Left ventricle myocardium superior (tissue), 1 donor: ENCODE measurements at regions of chr20 and their contacts with region 1.

Region 1: GRCh38 chr20:47379433-47380150 is 23.1 kb upstream of the ZMYND8 start:
- DNase-seq: no peak
- ATAC-seq: no peak

Region 2: DNA sequence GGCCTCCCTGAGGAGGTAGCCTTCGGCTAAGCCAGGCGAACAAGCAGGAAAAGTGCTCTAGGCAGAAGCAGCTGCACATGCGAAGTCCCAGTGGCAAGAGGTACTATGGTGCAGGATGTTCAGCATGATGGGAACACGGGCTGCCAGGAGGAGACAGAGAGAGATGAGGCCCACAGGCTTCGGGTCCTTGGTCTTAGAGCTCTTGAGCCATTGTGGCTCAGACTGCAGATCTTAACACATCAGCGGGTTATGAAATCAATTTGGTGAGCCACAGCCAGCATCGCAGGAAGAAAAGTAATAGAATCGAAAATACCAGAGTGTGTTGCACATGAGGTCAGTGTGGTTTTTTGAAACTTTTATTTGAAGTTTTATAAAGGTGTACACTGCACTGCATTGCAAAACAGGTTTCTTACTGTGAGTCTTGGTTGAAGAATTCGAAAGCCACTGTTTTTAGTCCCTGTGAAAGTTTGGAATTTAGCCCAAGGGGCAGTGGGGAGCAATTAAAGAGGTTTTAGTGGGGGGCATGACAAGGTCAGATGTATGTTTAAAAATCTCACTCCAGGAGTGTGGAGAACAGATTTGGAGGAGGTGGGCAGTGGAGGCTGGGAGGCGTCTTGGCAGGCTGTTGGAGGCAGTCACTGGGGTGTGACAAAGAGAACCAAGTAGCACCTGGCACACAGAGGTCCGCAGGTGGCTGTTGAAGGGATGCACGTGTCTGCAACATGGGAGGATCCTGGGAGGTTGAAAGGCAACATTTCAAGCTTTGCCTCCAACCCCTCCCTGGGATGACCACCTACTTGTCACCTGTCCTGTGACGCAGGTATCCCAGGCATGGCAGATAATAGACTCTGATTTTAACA is 415.6 kb before region 1 on chr20:
- intact Hi-C with region 1: no loop called
- DNase-seq: no peak
- ATAC-seq: no peak

Region 3: DNA sequence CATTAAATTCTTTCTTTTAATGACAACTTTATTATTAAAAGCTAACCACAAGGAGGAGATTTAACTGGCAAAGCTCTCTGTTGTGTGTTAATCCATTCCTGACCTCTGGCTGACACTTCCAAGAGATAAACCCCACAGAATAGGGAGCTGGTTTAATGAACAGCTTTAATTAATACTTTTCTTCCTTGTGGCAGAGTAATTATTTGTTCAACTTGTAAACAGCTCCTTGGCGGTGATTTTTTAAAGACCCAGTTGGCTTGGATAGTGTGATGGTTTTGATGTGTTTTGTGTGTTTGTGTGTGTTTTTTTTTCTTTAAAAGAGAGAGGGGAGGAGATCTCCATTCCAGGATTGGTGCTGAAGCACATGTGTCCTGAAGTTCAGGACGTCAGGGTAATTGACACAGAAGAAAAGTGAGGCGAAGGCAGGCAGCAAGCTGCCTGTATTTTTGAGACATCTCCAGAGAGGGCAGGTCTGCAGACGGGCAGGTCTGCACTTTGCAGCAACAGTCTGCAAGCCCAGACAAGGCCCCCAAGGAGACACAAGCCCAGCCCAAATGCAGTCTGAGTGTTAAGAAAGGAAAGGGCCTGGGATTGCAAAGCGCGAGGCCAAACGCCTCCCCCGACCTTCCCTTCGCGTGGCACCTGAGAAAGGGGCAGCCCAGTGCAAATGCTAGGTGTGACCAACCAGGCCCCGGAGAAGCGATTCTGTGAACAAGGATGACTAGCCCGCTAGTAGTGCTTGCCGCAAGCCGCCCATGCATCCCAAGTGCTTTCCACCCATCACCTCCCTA is 253.8 kb before region 1 on chr20:
- intact Hi-C with region 1: no loop called
- DNase-seq: peak; percentile 38
- ATAC-seq: peak; percentile 75

Region 4: GRCh38 chr20:47272893-47273590 is 106.5 kb before region 1 on chr20:
- intact Hi-C with region 1: loop called (anchors 1 kb)
- DNase-seq: no peak
- ATAC-seq: peak; percentile 71

Region 5: DNA sequence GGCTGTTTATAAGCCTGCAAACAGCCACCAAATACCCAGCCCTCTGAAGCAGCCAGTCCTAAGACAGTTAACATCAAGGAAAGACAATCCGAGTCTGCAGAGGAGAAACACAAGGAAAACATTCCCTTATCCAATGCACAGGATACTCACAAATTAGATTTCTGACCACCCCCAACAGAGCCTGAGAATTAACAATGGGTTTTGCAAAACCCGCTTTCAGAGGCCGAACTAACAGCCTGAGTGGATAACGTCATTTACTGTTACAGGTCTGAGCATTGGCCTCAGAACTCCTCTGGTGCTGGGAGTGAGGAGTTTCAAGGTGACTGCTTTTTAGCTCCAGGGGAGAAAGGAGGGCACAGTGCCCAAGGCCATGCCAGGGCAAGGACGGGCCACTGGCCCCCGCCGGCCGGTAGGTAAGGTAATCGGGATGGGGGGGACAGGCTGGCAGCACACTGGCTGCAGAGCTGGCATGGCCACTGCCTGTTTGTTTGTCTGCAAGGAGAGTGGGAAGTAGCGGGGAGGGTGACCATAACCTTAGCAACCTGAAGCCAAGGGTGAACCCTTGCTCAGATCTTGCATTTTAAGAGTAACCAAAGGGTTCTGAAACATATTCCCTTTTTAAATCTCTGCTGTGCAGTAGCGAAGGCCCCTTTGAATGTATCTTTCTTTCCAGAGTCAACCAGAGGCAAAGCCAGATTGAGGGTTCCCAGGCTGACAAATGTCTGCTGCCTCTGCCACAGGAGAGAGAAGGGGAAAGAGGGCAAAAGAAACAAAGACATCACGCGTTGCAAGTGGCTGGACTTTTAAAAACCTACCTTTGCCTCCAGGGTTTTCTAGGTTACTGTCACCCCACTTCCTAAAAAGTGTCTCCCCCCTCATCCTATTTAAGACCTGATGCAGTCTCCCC is 27.0 kb before region 1 on chr20:
- intact Hi-C with region 1: no loop called
- DNase-seq: peak; percentile 78
- ATAC-seq: peak; percentile 58

Region 6: GRCh38 chr20:47600967-47601547 is 221.5 kb after region 1 on chr20:
- intact Hi-C with region 1: no loop called
- DNase-seq: no peak
- ATAC-seq: no peak